Transverse colon (tissue), 4 donors: ENCODE measurements at regions of chr1 and their contacts with region 1.

Region 1: DNA sequence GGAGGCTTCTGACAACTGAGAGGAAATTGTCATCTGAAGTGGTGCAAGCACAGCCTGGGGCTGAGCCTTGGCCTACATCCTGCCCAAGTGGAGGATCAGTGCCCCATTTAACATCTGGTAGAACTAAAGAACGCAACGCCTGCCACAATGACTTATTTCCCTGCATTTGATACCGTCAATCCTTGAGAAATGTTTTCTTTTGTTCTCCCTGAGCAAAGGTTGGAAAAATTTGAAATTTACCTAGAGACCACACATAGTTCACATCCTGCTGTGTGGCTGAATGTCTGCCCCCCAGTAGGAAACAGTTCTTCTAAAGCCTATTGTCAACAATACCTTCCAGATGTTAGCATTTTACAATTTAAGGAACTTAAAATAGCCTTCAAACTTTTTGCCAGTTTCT is 5.6 kb upstream of the RGS4 start:
- DNase-seq: no peak
- H3K4me3 ChIP-seq: no peak overlapping the region
- H3K27ac ChIP-seq: no peak overlapping the region
- H3K4me1 ChIP-seq: no peaks in the 10 kb centered on the region
- H3K27me3 ChIP-seq: peaks cover 10% of the 10 kb centered on the region
- CTCF ChIP-seq: no peak
- EP300 ChIP-seq: no peak
- POLR2A ChIP-seq: no peak

Region 2: GRCh38 chr1:162422662-162423375 is 640.8 kb before region 1 on chr1:
- in situ Hi-C with region 1: no loop called
- intact Hi-C with region 1: no loop called
- DNase-seq: no peak
- H3K4me3 ChIP-seq: no peak overlapping the region
- H3K27ac ChIP-seq: no peak overlapping the region
- H3K4me1 ChIP-seq: peaks cover 0 to 25% (median 12%) of the 10 kb centered on the region in 4 donors
- H3K27me3 ChIP-seq: no peaks in the 10 kb centered on the region
- CTCF ChIP-seq: no peak
- EP300 ChIP-seq: no peak
- POLR2A ChIP-seq: no peak

Region 3: DNA sequence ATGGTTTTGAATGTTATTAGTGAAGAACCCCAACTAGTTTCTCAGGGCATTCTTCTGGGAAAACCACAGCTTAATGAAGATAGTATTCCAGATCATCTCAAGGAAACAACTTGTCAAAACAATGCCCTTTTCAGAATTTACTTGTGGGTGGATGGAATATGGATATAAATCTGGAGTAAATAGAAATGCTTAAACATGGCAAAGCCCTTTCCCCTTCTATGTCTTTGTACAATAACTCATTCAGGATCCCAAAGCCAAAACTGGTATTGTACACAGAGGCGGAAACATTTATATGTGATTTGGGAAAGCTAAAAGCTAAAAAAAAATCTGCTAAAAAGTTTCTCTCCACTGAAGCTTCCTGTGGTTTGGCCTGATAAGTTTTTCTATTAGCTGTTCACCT is 194.6 kb after region 1 on chr1:
- in situ Hi-C with region 1: no loop called
- intact Hi-C with region 1: no loop called
- DNase-seq: no peak
- H3K4me3 ChIP-seq: no peak overlapping the region
- H3K27ac ChIP-seq: no peak overlapping the region
- H3K4me1 ChIP-seq: no peaks in the 10 kb centered on the region
- H3K27me3 ChIP-seq: no peaks in the 10 kb centered on the region
- CTCF ChIP-seq: no peak
- EP300 ChIP-seq: no peak
- POLR2A ChIP-seq: no peak

Region 4: GRCh38 chr1:163834778-163835177 is 771.2 kb after region 1 on chr1:
- in situ Hi-C with region 1: no loop called
- intact Hi-C with region 1: loop called (anchors 5 kb)
- DNase-seq: no peak
- H3K4me3 ChIP-seq: no peak overlapping the region
- H3K27ac ChIP-seq: no peak overlapping the region
- H3K4me1 ChIP-seq: no peaks in the 10 kb centered on the region
- H3K27me3 ChIP-seq: no peaks in the 10 kb centered on the region
- CTCF ChIP-seq: no peak
- EP300 ChIP-seq: no peak
- POLR2A ChIP-seq: no peak